Activated CD4-positive, alpha-beta memory T cell treated with anti-CD3 and anti-CD28 coated beads for 36 hours (primary cell): ENCODE measurements at regions of chr12 and their contacts with region 1.

Region 1: DNA sequence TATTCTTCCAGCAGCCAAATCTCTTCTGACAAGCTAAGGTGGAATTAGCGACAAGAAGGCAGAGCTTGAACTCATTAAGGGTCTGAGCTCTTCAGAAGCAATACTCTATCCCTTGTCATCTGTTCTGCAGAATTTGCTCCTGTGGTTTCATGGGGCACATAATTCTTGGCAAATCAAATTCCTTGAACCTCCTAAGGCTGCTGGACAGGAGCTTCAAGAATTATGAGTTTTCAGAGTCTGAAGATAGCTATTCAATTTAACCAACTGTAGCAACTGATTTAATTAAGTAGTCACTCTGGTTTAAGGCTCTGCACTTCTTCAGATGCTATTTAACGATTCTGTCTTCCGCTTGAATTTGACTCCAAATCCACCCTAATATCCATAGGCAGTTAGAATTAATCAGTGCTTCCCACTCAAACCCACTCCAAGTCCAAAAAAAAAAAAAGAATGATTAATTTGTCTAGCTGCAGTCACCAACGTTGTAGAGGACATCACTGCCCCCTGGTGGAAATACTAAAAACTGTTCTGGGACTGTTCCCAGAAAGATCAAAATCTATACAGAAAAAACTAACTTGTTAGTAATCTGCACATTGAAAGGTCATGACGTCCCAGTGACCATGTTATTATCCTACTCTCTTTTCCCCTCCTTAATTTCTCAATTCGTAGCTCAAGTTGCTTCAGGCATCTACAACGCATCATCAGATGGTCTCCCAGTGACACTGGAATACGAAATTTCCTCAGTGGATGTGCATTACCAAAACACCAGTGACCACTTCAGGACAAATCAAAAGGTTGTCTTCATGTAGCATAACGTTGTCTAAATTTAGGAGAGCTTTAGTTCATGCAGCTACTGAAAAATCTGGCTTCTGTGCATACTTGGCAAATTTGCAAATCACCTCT is 169.8 kb downstream of the KIF21A start:
- DNase-seq: no peak
- H3K4me3 Mint-ChIP-seq: no peak overlapping the region
- H3K27ac Mint-ChIP-seq: no peak overlapping the region
- H3K4me1 Mint-ChIP-seq: no peaks in the 10 kb centered on the region
- H3K27me3 Mint-ChIP-seq: peaks cover 6% of the 10 kb centered on the region

Region 2: DNA sequence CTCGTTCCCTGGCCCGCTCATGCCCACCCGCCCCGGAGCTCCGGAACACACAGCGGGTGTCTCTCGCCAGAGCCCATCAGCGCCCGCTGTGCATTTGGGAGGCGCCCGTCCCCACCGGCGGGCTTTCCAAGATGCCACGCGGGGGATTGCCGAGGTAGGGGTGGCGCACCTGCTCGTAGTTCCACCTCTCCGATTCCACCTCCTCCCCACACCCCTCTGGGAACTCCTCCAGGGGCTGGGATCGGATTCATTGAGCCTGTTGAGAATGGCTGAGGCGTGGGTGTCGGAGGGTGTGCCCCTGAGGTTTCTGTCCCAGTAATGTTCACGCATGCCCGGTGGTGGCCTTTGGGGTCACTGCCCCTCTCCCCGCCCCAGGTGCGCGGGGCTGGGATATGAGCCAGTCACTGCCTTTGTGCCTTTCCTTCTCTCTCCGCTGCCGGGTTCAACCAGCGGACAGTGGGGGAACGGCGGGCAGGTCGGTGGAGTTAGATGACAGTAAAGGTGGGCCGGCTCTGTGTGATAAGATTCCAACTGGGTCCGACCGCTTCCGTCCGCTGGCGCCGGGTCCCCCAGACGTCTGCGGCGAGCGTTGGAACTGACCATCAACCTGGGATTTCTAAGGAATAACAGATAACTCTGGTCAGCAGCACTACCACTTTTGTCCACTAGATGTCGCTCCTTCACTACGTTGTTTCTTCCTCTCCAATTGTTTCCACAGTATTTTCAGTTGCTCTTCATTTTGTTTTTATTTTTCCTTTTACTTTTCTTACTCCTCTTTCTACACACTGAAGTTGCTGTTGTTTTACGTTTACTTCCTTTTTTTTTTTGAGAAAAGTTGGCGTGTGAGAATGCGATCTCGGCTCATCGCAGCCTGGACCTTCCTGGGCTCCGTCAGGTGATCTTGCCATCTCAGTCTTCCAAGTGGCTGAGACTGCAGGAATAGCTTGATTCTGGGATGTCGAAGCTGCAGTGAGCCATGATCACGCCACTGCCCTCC is 1134.6 kb before region 1 on chr12:
- CTCF ChIA-PET with region 1: no interaction called
- POLR2A ChIA-PET with region 1: no interaction called
- intact Hi-C with region 1: loop called (anchors 5 kb)
- DNase-seq: peak; percentile 65
- H3K4me3 Mint-ChIP-seq: peak overlapping the region; percentile 59
- H3K27ac Mint-ChIP-seq: no peak overlapping the region
- H3K4me1 Mint-ChIP-seq: peaks cover 6% of the 10 kb centered on the region
- H3K27me3 Mint-ChIP-seq: no peaks in the 10 kb centered on the region

Region 3: DNA sequence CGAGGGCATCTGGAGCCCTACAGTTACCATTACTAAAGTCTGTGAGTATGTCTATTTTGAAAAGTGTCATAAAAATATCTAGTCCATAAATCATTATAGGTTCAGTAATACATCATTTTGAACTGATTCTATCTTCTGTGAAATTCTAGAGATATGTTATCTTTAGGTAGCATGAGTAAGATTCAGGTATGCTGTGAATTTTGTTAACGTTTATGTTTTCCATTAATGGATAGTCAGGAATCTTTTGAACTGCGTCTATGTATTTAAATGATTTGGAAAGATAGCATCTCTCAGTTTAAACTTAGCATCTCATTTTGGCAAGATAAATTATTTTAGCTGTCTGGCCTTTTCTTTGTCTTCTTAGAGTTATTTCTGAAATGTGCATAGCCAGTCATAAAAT is 948.2 kb before region 1 on chr12:
- CTCF ChIA-PET with region 1: interaction called, 38 read pairs
- POLR2A ChIA-PET with region 1: no interaction called
- intact Hi-C with region 1: loop called (anchors 2 kb)
- DNase-seq: no peak
- H3K4me3 Mint-ChIP-seq: no peak overlapping the region
- H3K27ac Mint-ChIP-seq: no peak overlapping the region
- H3K4me1 Mint-ChIP-seq: no peaks in the 10 kb centered on the region
- H3K27me3 Mint-ChIP-seq: no peaks in the 10 kb centered on the region

Region 4: GRCh38 chr12:38332814-38333213 is 940.3 kb before region 1 on chr12:
- CTCF ChIA-PET with region 1: interaction called, 38 read pairs
- POLR2A ChIA-PET with region 1: no interaction called
- intact Hi-C with region 1: loop called (anchors 2 kb)
- DNase-seq: no peak
- H3K4me3 Mint-ChIP-seq: no peak overlapping the region
- H3K27ac Mint-ChIP-seq: no peak overlapping the region
- H3K4me1 Mint-ChIP-seq: no peaks in the 10 kb centered on the region
- H3K27me3 Mint-ChIP-seq: no peaks in the 10 kb centered on the region

Region 5: DNA sequence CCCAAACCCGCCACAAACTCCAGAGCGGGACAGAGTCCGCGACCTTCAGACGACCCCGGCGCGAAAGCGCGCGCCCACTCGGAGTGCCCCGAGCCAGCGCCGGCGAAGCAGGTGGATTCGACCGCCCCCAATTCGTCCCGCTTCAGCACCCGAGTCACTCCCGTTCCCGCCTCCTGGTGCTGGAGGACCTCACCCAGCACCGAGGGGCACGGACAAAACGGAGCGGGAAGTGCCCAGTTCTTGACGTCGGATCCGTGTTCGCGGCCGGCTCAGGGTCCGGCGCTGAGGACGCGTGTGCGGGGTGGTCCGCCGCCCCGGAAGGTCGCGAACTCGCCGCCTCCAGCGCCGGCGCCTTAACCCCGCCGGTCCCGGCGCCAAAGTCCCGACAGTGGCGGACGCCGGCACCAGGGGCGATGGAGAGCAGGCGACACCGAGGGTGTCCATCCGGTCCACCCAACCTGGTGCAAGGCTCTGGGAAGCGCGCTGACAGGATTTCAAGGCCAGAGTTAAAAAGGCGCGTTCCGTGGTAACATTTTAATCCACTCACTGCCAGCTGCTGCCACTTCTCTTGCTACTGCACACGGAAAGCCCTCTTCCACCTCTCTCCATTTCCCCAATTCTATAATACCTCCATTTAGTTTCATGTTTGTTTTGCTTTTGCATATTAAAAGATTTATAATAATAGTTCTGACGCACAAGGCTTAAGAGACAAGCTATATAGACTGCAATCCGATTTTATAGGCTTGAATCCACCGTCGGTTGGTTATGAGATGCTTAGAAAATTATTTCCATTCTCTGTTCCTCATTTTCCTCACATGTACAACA is 127.7 kb before region 1 on chr12:
- CTCF ChIA-PET with region 1: interaction called, 4 read pairs
- POLR2A ChIA-PET with region 1: no interaction called
- intact Hi-C with region 1: loop called (anchors 1 kb)
- DNase-seq: peak; percentile 55
- H3K4me3 Mint-ChIP-seq: no peak overlapping the region
- H3K27ac Mint-ChIP-seq: no peak overlapping the region
- H3K4me1 Mint-ChIP-seq: peaks cover 2% of the 10 kb centered on the region
- H3K27me3 Mint-ChIP-seq: peaks cover 19% of the 10 kb centered on the region

Region 6: DNA sequence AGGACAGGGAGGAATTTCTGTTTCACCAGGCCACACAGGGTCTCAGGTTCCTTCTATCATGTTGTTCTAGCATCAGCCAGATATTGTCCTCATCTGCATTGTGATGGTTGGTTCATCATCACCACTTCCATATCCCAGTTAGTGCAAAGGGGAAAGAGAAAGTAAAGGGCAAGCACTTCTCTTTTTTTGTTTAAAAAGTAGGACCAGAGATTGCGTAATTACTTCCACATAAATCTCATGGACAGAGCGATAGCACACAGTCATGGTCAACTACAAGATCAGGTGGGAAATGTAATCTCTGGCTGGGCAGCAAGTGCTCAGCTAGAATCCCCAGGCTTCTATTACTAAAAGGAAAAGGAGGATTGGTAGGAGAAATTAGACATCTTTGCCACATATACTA is 14.7 kb after region 1 on chr12:
- CTCF ChIA-PET with region 1: interaction called, 28 read pairs
- POLR2A ChIA-PET with region 1: no interaction called
- intact Hi-C with region 1: no loop called
- DNase-seq: no peak
- H3K4me3 Mint-ChIP-seq: no peak overlapping the region
- H3K27ac Mint-ChIP-seq: no peak overlapping the region
- H3K4me1 Mint-ChIP-seq: no peaks in the 10 kb centered on the region
- H3K27me3 Mint-ChIP-seq: peaks cover 2% of the 10 kb centered on the region